B cell (primary cell): ENCODE measurements at regions of chr17 and their contacts with region 1.

Region 1: DNA sequence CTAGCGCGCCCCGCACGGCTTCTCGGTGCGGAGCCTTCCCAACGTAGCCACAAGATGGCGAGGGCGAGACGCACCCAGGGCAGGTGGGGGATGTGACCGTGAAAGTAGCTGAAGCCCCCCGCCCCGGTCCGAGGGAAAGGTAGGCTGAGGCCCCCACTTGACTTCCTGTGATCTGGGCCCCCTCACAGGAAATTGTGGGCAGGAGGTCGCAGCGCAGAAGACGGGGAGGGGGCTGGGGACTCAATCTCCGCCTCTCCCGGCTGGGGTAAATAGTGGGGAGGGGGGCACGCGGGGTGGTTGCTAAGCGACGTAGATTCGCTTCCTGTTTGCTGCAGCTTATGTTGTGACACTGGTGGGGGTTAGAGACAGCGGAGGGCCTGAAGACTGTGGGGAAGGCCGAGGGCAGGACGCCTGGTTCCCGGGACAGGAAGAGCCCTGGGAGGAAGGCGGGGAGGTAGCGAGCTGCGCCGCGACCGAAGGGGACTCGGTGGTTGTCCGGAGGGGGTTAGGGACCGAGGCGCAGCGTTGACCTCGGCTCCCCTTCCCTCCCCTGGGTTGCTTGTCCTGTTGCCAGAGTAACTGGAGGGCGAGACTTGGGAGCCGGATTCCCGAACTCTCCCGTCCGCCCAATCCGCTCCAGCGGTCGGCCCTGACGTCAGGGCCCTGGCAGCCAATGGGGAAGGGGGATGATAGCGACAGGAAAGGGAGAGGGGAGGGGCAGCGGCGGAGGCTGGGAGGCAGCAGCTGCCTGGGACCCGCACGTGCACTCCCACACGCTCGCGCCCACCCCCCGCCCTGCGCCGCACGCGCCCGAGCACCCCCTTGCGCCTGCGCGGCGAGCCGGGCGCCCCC is 1.2 kb downstream of the KDM6B start:
- DNase-seq: peak; percentile 96
- ATAC-seq: peak; percentile 44
- H3K4me3 ChIP-seq: peak overlapping the region; percentile 42 to 99 (median 95)
- H3K4me3 Mint-ChIP-seq: peak overlapping the region; percentile 99
- H3K27ac ChIP-seq: peak overlapping the region; percentile 93 to 100
- H3K27ac Mint-ChIP-seq: peak overlapping the region; percentile 97
- H3K4me1 ChIP-seq: peaks cover 38 to 56% of the 10 kb centered on the region in 2 donors
- H3K4me1 Mint-ChIP-seq: peaks cover 46% of the 10 kb centered on the region
- H3K27me3 ChIP-seq: peaks cover 0 to 13% (median under 1%) of the 10 kb centered on the region in 4 experiments
- H3K27me3 Mint-ChIP-seq: peaks cover 15% of the 10 kb centered on the region
- CTCF ChIP-seq: peak; percentile 86

Region 2: GRCh38 chr17:7014261-7014994 is 820.8 kb before region 1 on chr17:
- CTCF ChIA-PET with region 1: no interaction called
- POLR2A ChIA-PET with region 1: interaction called, 10 read pairs
- intact Hi-C with region 1: loop called (anchors 10 kb)
- DNase-seq: peak; percentile 99
- ATAC-seq: peak; percentile 81
- H3K4me3 ChIP-seq: peak overlapping the region; percentile 95 to 100 (median 96)
- H3K4me3 Mint-ChIP-seq: peak overlapping the region; percentile 99
- H3K27ac ChIP-seq: peak overlapping the region; percentile 97 to 99
- H3K27ac Mint-ChIP-seq: peak overlapping the region; percentile 100
- H3K4me1 ChIP-seq: peaks cover 40 to 59% of the 10 kb centered on the region in 2 donors
- H3K4me1 Mint-ChIP-seq: peaks cover 54% of the 10 kb centered on the region
- H3K27me3 ChIP-seq: no peaks in the 10 kb centered on the region
- H3K27me3 Mint-ChIP-seq: no peaks in the 10 kb centered on the region
- CTCF ChIP-seq: peak; percentile 76

Region 3: DNA sequence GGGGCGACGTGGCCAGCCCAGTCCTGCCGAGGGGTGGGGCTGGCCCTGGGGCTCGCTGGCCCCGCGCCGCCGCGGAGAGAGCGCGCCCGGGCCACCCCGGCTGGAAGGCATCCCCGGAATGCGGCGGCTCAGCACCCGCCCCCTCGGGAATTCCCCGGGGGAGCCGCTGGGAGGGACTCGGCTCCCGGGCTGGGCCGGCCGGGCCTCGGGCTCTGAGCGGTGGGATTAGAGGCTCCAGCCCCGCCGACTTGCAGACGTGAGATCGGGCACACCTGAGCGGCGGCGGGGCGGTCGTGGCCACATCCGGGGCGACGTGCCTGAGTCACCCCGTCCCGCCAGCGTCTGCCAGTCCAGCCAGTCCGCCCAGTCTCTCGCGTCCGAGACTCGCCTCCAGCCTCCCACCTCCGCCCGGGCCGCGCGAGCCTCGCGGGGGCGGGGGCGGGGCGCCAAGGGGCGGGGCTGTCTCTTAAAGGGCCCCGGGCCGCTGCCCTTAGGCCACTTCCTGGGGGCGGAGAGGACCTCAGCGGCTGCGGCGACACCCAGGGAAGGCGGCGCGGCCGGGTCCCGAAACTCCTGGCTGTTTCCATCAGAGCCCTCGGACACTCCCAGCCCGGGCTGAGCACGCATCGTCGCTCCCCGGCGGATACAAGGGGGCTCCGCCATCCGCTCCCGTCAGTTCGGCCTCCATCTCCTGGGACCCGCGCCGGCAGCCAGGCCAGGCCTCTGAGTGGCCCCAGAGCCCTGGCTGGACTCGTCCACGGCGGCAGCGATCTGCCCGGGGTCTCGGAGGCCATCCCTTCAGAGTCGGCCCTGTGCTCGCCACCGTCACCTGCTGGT is 483.3 kb before region 1 on chr17 and contains the start of gene KCTD11:
- CTCF ChIA-PET with region 1: no interaction called
- POLR2A ChIA-PET with region 1: no interaction called
- intact Hi-C with region 1: no loop called
- DNase-seq: peak; percentile 78
- ATAC-seq: peak; percentile 67
- H3K4me3 ChIP-seq: peak within 1 kb of the TSS; percentile 35 to 92 (median 84)
- H3K4me3 Mint-ChIP-seq: peak within 1 kb of the TSS; percentile 94
- H3K27ac ChIP-seq: peak within 1 kb of the TSS; percentile 63 to 90
- H3K27ac Mint-ChIP-seq: peak within 1 kb of the TSS; percentile 91
- H3K4me1 ChIP-seq: peaks cover 14 to 41% of the 10 kb centered on the region in 2 donors
- H3K4me1 Mint-ChIP-seq: peaks cover 38% of the 10 kb centered on the region
- H3K27me3 ChIP-seq: no peaks in the 10 kb centered on the region
- H3K27me3 Mint-ChIP-seq: no peaks in the 10 kb centered on the region
- CTCF ChIP-seq: peak; percentile 50
- total RNA-seq, gene KCTD11: 13.4 and 15.4 TPM in 2 replicates

Region 4: DNA sequence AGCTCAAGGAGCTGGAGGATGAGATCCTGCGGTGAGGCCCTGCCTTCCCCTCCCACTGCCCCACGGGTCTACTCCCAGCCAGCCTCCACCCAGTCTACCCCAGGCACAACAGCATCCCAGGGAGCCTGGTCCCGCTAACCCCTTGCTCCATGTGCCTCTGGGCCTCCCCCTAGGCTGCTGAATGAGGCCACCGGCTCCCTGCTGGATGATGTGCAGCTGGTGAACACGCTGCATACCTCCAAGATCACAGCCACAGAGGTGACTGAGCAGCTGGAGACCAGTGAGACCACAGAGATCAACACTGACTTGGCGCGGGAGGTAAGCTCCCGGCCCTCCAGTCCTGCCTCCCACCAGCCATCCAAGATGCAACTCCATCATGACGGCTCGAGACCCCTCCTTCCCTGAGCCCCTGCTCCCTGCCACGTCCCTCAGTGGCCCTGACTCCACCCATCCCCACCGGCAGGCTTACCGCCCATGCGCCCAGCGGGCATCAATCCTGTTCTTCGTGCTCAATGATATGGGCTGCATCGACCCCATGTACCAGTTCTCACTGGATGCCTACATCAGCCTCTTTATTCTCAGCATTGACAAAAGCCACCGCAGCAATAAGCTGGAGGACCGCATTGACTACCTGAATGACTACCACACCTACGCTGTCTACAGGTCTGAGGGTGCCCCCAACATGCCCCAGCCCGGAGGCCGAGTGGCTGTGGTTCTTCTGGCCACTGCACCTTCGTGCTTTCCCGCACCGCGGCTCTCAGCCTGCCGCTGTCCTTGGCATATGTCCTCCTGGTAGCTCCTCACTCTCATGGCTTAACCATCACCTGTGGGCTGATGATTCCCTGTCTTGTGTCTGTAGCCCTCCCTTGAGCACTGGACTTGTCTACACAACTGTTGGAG is 16.2 kb before region 1 on chr17:
- CTCF ChIA-PET with region 1: interaction called, 19 read pairs
- POLR2A ChIA-PET with region 1: interaction called, 3 read pairs
- intact Hi-C with region 1: loop called (anchors 1 kb)
- DNase-seq: no peak
- ATAC-seq: no peak
- H3K4me3 ChIP-seq: no peak overlapping the region
- H3K4me3 Mint-ChIP-seq: no peak overlapping the region
- H3K27ac ChIP-seq: no peak overlapping the region
- H3K27ac Mint-ChIP-seq: no peak overlapping the region
- H3K4me1 ChIP-seq: no peaks in the 10 kb centered on the region
- H3K4me1 Mint-ChIP-seq: no peaks in the 10 kb centered on the region
- H3K27me3 ChIP-seq: no peaks in the 10 kb centered on the region
- H3K27me3 Mint-ChIP-seq: peaks cover 8% of the 10 kb centered on the region
- CTCF ChIP-seq: no peak

Region 5: DNA sequence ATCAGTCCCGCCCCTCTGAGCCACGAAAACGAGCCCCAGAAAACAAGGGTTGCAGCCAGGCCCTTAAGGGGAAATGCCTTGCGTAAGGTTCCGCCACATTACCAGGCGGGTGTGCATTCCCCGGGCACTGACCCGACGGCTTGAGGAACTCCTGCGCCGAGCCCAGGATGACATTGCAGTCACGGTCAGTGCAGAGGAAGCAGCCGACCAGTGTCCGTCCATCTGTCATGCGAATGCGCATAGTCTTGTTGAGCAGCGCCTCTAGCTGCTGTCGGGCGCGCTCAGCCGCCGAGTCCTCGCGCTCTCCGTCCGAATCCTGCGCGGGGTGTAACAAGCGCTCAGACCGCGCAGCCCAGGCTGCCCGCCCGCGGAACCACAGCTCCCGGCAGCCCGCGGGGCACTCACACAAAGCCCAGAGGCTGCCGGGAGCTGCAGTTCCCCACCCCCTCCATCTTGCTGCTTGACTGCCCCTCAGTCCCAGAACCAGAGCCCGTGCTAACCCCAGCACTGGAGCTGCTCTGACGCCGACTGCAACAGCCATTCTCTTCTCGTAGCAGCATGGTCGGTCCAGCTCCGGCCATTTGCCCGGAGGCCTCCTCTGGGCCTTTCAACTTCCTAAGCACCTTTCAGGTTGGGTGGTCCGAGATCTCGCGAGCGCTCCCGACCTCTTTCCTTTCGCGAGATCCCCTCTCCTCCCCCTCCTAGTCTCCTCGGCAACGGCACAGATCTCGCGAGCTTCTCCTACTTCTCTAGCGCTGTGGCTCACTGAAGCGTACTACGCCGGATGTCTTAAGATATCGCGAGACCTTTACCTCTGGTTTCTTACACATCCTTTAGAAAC is 21.9 kb after region 1 on chr17 and contains the start of gene NAA38:
- CTCF ChIA-PET with region 1: interaction called, 53 read pairs
- POLR2A ChIA-PET with region 1: interaction called, 21 read pairs
- intact Hi-C with region 1: loop called (anchors 1 kb)
- DNase-seq: peak; percentile 99
- ATAC-seq: peak; percentile 82
- H3K4me3 ChIP-seq: peak within 1 kb of the TSS; percentile 57 to 92 (median 85)
- H3K4me3 Mint-ChIP-seq: no peak within 1 kb of the TSS
- H3K27ac ChIP-seq: peak within 1 kb of the TSS; percentile 85 to 90
- H3K27ac Mint-ChIP-seq: no peak within 1 kb of the TSS
- H3K4me1 ChIP-seq: peaks cover 20 to 32% of the 10 kb centered on the region in 2 donors
- H3K4me1 Mint-ChIP-seq: peaks cover 5% of the 10 kb centered on the region
- H3K27me3 ChIP-seq: no peaks in the 10 kb centered on the region
- H3K27me3 Mint-ChIP-seq: no peaks in the 10 kb centered on the region
- CTCF ChIP-seq: no peak
- total RNA-seq, gene NAA38: 20.0 and 22.0 TPM in 2 replicates

Region 6: DNA sequence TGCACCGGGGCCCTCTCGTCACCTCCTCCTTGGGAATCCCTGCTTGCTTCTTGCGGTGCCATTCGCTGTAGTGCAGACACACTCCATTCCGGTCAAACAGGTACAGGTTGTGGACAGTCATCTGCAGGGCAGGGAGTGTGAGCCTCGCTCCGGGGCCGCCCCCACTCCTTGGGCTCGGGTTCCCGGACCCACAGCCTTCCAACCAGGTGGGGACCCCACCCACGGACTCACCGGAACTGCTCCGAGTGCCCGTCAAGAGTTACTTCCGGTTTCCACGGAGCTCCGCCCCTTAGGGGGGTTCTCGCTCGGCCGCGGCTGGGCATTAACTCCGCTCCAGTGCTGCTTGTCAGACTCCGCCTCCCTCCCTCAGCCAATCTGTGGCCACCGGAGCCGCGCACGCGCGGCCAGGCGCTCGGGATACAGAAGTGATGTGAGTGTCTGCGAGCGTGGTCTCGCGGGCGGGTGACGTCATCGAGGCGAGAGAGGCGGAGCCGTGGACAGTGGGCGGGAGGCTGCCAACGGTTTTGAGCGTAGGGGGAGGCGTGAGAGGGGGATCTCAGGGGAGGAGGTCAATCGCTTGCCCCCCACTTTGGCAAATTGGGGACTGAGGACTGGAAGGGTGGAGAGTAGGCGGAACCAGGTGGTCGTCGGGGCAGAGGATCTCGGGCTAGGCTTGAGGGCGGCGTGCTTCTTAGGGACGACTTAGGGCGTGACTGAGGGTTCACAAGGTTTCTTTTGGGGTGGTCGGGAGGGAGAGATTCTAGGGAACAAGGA is 96.7 kb after region 1 on chr17 and contains the starts of genes CNTROB and TRAPPC1:
- CTCF ChIA-PET with region 1: interaction called, 4 read pairs
- POLR2A ChIA-PET with region 1: no interaction called
- intact Hi-C with region 1: loop called (anchors 1 kb)
- DNase-seq: peak; percentile 100
- ATAC-seq: peak; percentile 98
- H3K4me3 ChIP-seq: peak within 1 kb of the TSS; percentile 75 to 98 (median 89)
- H3K4me3 Mint-ChIP-seq: peak within 1 kb of the TSS; percentile 95
- H3K27ac ChIP-seq: peak within 1 kb of the TSS; percentile 77 to 88
- H3K27ac Mint-ChIP-seq: peak within 1 kb of the TSS; percentile 95
- H3K4me1 ChIP-seq: peaks cover 18 to 33% of the 10 kb centered on the region in 2 donors
- H3K4me1 Mint-ChIP-seq: peaks cover 44% of the 10 kb centered on the region
- H3K27me3 ChIP-seq: no peaks in the 10 kb centered on the region
- H3K27me3 Mint-ChIP-seq: no peaks in the 10 kb centered on the region
- CTCF ChIP-seq: no peak
- total RNA-seq, gene CNTROB: 34.8 and 40.4 TPM in 2 replicates
- total RNA-seq, gene TRAPPC1: 86.0 and 118 TPM in 2 replicates